ENCODE measurements at regions of chr16 and their contacts with region 1.

Region 1: DNA sequence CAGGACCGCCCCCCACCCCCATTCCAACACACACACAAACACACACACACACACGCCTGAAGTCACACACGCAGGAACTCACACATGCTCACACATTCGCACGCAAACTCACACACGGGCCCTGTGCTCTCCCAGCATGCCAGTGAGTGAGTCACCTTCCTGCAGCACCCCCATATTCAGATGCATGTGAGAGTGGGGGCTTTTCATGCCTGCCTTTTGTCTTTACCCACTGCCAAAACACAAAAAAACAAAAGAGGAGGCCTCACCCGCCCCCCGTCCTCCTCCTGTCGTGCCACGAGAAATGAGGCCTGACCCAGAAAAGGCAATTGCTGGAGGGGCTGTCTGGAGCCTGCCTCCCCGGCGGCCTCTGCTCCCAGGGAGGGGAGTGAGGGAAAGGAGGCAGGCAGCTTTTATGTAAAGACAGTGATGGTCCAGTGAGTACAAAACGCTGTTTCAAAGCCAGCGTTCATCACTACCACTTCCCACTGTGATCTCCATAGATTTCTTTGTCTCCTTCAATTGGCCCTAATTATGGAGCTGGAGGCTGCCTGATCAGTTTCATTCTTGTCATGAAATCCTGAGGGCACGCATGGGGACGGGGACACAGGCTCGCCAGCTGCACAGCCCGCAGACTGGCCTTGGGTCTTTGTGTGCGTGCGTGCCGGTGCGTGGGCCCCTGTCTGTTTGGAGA is 29.5 kb upstream of the GSE1 start:
- DNase-seq: peak in 1 of 2 experiments; percentile 51
- H3K4me3 ChIP-seq: peak overlapping the region in 2 of 4 experiments; percentile 14 to 31; a peak in 4 of 8 replicates
- H3K27ac ChIP-seq: no peak overlapping the region
- H3K4me1 ChIP-seq: peaks cover 32 to 84% (median 78%) of the 10 kb centered on the region in 4 experiments
- H3K27me3 ChIP-seq: peaks cover 0 to 32% (median 24%) of the 10 kb centered on the region in 4 experiments; a peak in 5 of 7 replicates
- CTCF ChIP-seq: no peak
- EP300 ChIP-seq: no peak
- POLR2A ChIP-seq: 0 out of 3 replicates have a peak, but pooled peaks of 1 of the 2 experiments have one; percentile 19
- RAD21 ChIP-seq: no peak

Region 2: DNA sequence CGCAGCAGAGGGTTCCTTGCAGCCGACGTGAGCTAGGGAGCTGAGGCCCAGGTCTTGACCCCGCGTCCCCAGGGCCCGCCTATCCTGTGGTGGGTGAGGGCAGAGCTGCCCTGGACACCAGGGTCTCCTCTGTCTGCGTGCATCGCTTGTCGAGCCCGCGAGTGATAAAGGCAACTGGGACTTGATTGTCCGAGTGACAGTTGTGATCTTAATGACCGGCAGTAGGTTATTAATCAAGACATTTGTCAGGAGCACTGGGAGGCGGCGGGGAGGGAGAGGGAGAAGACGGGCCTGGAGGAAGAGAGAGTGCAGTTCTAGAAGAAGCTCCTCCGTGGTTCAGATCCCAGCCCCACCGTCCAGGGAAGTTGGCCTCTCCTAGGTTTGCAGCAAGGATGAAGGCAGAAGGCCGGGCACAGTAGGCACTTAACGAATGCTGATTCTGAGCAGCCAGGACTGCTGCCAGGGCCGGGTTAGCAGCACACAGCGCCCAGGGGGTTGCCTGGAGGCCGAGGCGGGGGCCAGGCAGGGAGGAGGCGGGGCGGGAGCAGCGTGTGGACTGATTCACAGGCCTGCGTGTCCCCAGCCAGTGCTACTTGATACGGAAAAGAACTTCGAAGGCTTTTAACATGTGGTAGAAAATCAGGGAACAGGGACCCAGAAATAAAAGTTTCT is 18.2 kb after region 1 on chr16:
- CTCF ChIA-PET with region 1: interaction called, 65 read pairs
- POLR2A ChIA-PET with region 1: interaction called, 28 read pairs
- DNase-seq: peak in 1 of 2 experiments; percentile 66
- H3K4me3 ChIP-seq: no peak overlapping the region
- H3K27ac ChIP-seq: no peak overlapping the region
- H3K4me1 ChIP-seq: peaks cover 10 to 58% (median 46%) of the 10 kb centered on the region in 4 experiments
- H3K27me3 ChIP-seq: no peaks in the 10 kb centered on the region
- CTCF ChIP-seq: no peak
- EP300 ChIP-seq: no peak
- POLR2A ChIP-seq: no peak
- RAD21 ChIP-seq: no peak

Region 3: DNA sequence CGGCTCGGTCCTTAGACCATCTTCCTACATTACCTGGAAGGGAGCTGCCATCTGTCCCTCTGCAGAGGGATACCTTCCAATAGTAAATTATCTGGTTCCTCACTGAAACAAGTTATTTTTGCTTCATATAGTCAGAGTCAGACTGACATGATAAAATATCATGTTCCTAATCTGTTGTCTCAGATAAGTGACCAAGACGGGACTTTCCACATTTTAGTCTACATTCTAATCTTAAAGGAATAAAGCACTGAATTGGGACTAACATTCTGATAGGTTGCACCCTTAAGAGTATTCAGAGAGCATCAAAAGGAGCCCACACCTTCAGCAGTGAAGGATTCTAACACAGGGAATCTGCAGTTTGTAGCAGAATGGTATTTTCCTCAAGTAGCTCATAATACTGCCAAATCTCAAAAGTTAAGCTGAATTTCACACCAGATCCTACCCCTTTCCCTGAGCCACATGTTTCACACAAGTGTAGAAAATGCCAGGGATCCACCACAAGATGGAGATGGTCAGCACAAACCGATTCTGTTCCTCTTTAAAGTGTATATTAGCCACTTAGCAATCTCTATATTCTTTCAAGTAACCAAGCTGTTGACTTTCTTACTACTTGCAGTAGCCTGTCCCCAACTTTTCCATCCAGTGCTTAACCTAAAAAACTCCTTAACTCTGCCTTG is 91.8 kb after region 1 on chr16:
- CTCF ChIA-PET with region 1: no interaction called
- POLR2A ChIA-PET with region 1: no interaction called
- DNase-seq: no peak
- H3K4me3 ChIP-seq: no peak overlapping the region
- H3K27ac ChIP-seq: no peak overlapping the region
- H3K4me1 ChIP-seq: no peaks in the 10 kb centered on the region
- H3K27me3 ChIP-seq: no peaks in the 10 kb centered on the region
- CTCF ChIP-seq: peak in 2 of 3 experiments; percentile 47 to 68; a peak in 2 of 4 replicates
- EP300 ChIP-seq: no peak
- POLR2A ChIP-seq: peak in 1 of 2 experiments; percentile 46; a peak in 2 of 3 replicates
- RAD21 ChIP-seq: peak; percentile 35 to 55

Measured in H1 (cell line).